Dorsolateral prefrontal cortex (tissue), 120 donors: ENCODE measurements at regions of chr15 and their contacts with region 1.

Region 1: DNA sequence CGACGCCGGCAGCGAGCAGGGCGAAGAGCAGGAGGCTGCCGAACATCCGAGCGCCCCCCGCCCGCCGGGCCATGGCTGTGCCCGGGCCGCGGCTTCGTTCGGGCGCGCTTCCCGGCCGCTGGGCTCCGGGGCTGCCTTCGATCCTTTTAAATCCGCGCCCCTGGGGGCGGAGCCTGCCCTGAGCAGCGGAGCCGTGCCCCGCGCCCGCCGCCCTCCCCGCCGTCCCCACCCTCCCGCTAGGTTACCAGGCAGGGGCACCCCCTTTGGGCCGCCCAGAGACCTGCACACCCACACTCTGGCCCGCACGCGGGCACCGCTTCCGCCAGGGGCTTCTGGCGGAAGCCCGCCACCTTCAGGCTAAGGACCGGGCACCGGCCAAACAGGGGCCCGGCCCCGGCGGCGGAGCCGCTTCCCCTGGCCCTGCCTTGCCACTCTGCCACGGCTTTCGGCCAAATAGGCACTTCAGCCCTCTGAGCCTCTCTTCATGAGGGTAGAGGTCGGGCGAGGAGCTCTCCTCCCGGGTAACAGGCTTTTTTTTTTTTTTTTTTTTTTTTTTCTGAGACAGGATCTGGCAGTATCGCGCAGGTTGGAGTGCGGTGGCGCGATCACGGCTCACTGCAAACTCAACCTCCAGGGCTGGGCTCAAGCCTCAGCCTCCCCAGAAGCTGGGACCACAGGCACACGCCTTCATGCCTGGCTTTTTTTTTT is at the start of gene NMB:
- DNase-seq: peak; percentile 39 to 75 (median 52)
- H3K4me3 ChIP-seq: peak within 1 kb of the TSS; percentile 53 to 82 (median 71)
- H3K27ac ChIP-seq: peak within 1 kb of the TSS in 57 of 59 donors; percentile 0 to 88 (median 77)
- H3K27me3 ChIP-seq: no peaks in the 10 kb centered on the region
- CTCF ChIP-seq: peak in 54 of 56 donors; percentile 30 to 84 (median 56)
- total RNA-seq, gene NMB: 0.71 to 14.1 (median 4.9) TPM

Region 2: GRCh38 chr15:83955806-83956265 is 702.4 kb before region 1 on chr15:
- intact Hi-C with region 1: no loop called
- DNase-seq: no peak
- H3K4me3 ChIP-seq: no peak overlapping the region
- H3K27ac ChIP-seq: no peak overlapping the region
- H3K27me3 ChIP-seq: no peaks in the 10 kb centered on the region
- CTCF ChIP-seq: no peak

Region 3: DNA sequence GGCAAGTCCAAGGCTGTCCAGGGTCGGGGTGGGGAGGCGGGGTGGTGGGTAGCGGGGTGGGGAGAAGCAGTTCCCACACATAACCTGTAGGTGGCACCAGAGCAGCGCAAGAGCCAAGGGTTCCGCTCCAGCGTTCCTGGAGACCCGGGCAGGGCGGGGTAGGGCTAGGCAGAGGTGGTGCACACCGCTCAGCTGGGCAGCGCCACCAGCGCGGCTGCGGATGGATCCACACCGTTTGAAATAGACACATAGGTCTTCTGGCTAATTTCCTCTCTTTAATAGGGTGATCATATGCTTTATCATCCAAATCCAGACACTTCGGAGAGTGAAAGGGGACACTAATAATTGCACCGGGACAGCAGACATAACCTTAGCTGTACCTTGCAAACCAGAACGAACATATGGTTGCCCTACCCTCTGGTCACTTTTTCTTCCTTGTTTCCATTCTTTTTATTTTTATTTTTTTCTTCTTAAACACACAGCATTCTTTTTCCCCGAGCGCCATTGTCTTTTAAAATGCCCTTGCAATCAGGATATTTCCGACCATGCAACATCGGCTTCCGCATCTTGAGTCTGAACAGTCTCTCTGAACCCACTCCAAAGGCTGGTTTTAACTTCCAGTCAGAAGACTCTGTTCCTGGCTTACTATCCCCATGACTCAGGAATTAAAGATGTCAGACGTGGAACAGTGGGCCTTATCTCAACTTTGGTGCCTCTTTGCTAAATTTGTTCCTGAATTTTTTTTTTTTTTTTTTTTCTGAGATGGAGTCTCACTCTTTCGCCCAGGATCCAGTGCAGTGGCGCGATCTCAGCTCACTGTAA is 70.0 kb before region 1 on chr15:
- intact Hi-C with region 1: loop called in 1 of 2 experiments (anchors 5 kb)
- DNase-seq: peak; percentile 59 to 88 (median 76)
- H3K4me3 ChIP-seq: peak overlapping the region; percentile 9 to 67 (median 50)
- H3K27ac ChIP-seq: no peak overlapping the region
- H3K27me3 ChIP-seq: no peaks in the 10 kb centered on the region
- CTCF ChIP-seq: peak in 55 of 56 donors; percentile 66 to 97 (median 87)

Region 4: DNA sequence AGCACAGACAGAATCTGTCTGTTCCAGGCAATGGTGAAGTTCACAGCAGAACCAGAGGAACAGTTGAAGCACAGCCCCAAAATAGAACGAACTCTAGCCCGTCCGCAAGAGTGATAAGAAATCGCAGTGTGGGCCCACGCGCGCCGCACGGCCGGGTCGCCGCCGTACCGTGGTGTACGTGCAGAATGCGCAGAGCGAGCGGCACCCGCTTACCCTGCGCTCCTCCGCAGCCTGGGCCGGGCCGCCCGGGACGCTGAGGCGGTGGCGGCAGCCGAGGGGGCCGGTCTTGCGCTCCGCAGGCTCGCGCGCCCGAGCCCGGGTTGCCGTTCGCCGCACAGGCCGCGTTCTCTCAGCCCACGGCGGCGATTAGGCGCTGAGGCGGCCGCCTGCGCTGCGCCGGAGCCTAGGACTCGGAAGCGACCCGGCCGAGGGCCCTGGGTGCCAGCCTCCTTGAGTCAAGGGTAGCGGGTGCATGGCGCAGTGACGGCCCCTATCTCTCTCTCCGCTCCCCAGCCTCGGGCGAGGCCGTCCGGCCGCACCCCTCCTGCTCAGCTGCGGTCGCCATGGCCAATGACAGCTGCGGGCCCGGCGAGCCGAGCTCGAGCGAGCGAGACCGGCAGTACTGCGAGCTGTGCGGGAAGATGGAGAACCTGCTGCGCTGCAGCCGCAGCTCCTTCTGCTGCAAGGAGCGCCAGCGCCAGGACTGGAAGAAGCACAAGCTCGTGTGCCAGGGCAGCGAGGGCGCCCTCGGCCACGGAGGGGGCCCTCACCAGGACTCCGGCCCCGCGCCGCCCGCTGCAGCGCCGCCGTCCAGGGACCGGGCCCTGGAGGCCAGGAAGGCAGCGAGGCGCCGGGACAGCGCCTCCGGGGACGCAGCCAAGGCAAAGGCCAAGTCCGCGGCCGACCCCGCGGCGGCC is 24.7 kb before region 1 on chr15:
- intact Hi-C with region 1: loop called (anchors 1 kb)
- DNase-seq: peak in 9 of 10 donors; percentile 39 to 75 (median 62)
- H3K4me3 ChIP-seq: peak overlapping the region; percentile 36 to 90 (median 78)
- H3K27ac ChIP-seq: peak overlapping the region; percentile 86 to 100 (median 97)
- H3K27me3 ChIP-seq: no peaks in the 10 kb centered on the region
- CTCF ChIP-seq: peak in 23 of 56 donors; percentile 3 to 54 (median 14)

Region 5: DNA sequence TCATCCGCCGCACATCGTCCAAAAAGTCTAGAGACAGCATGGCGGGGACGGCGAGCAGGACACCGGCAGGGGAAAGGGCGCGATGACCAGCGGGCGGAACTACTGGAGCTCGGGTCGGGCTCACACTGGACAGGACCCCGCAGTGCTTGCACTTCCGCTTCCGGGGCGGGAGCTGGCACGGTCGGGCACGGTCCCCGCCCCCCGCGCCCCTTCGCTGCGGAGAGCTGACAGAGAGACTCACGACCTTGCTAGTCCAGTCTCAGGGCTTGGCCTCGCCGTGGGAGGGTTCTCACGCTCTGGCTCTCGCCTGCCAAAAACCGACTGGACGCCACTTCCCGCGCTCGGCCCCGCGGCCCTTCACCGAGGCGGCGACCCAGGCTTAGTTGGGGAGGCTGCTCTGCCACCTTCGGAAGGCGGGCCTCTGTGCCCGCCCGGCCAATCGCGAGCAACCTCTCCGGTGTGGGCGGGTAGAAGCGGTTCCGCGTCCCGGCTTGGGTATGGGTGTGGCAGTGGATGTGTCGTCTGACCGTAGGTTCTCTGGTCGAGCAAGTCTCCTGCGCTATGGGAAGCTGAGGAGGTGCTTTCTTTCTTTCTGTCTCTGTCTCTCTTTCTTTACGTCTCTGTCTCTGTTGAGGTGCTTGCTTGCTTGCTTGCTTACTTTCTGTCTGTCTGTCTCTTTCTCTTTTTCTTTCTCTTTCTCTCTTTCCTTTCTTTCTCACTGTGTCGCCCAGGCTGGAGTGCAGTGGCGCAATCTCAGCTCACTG is 58.0 kb after region 1 on chr15 and contains the start of gene SEC11A:
- intact Hi-C with region 1: loop called (anchors 5 kb)
- DNase-seq: peak; percentile 93 to 97 (median 96)
- H3K4me3 ChIP-seq: peak within 1 kb of the TSS; percentile 61 to 99 (median 91)
- H3K27ac ChIP-seq: peak within 1 kb of the TSS; percentile 66 to 98 (median 95)
- H3K27me3 ChIP-seq: no peaks in the 10 kb centered on the region
- CTCF ChIP-seq: peak in 32 of 56 donors; percentile 7 to 53 (median 30)
- total RNA-seq, gene SEC11A: 22.6 to 55.4 (median 35.9) TPM

Region 6: GRCh38 chr15:84748274-84749110 is 90.3 kb after region 1 on chr15 and contains the start of gene ZNF592:
- intact Hi-C with region 1: loop called (anchors 1 to 5 kb)
- DNase-seq: peak; percentile 42 to 86 (median 68)
- H3K4me3 ChIP-seq: peak within 1 kb of the TSS; percentile 76 to 98 (median 91)
- H3K27ac ChIP-seq: peak within 1 kb of the TSS; percentile 96 to 100 (median 99)
- H3K27me3 ChIP-seq: no peaks in the 10 kb centered on the region
- CTCF ChIP-seq: peak in 7 of 56 donors; percentile 5 to 44 (median 23)
- total RNA-seq, gene ZNF592: 24.1 to 48.5 (median 30.4) TPM

Region 7: DNA sequence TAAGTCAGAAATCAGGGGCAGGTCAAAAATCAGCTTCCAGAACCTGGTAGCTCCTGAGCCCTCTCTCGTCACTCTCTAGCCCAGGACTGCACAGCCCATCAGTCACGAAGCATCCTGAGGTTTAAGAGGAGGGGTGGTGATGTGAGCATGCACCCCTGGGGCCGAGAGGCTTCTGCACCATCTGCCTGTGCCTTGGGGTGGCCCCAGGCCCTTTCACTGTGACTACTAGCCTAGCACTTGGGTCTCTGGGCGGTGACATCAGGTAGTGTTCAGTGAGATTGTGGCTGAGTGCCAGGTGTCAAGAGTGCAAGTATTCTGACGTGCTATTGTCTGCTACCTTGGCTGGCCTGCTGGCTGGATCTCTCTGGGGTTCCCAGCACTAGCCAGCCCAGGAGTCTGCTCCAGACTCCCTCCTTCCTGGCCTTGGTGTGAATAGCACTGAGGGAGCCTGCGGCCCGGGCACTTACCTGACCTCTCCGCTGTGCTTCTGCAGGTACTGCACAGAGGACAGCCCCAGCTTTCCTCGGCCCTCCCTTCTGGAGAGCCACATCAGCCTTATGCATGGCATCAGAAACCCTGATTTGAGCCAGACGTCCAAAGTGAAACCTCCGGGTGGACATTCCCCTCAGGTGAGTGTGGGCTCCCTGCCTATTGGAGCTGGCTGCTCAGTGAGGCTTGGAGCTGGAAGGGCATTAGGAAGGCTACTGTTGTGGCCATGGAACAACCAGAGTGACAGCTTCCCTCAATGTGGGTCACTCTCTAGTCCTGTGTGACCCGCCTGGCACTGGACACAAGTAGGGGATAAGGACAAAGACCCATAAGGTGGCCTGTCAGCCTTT is 141.3 kb after region 1 on chr15:
- intact Hi-C with region 1: no loop called
- DNase-seq: no peak
- H3K4me3 ChIP-seq: no peak overlapping the region
- H3K27ac ChIP-seq: no peak overlapping the region
- H3K27me3 ChIP-seq: no peaks in the 10 kb centered on the region
- CTCF ChIP-seq: no peak

Region 8: DNA sequence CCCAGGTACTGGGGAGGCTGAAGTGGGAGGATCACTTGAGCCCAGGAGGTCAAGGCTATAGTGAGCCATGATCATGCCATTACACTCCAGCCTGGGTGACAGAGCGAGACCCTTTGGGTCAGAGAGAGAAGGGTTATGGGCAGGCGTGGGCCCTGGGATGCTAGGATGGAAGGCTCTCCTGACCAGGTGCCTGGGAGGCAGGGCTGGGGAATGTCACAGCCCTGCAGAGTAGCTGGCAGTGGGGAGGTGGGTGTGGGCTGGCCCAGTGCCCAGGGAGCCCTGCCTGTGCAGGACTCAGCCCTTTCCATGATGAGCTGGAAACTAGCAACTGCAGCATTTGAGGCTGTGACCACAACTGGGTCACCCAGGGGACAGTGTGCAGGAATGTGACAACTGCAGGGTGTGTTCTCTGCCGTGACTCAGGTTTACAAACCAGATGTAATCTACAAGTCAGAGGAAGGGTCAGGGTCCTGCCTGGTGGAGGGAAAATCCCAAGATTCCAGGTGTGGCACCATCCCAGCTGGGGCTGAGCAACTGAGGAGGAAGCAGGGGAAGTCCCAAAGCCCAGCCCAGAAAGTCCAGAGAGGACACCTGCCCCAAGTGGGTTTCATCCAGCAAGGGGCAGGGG is 271.6 kb after region 1 on chr15:
- intact Hi-C with region 1: loop called (anchors 2 kb)
- DNase-seq: no peak
- H3K4me3 ChIP-seq: no peak overlapping the region
- H3K27ac ChIP-seq: no peak overlapping the region
- H3K27me3 ChIP-seq: no peaks in the 10 kb centered on the region
- CTCF ChIP-seq: no peak

Region 9: DNA sequence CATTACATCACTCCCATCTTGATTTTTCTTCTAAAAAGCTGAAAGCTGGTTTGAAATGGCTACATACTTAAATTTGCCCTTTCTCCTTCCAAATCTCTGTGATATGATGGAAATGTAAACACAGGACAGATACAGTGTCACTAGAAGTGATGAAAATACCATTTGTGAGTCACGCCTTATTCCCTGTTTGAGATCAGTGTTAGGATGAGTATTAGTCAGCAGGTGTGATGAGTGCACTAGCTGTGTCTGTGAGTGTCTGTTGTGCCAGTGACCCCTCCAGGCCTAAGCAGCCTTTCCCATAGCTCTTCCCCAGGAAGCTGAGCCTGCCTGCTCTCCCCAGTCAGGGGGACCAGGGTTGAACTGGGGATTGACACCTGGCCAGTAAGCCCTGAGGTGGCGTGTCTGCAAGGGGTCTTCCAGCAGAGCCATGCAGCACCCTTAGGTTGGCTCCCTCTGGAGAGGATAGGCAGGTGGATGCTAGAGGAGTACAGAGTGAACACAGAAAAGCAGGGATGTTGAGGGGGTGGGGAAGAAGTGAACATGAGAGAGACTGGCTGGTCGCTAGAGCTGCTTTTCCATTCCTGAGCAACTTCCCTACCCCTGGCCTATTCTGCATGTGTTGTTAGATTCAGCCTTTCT is 415.4 kb after region 1 on chr15:
- intact Hi-C with region 1: no loop called
- DNase-seq: no peak
- H3K4me3 ChIP-seq: no peak overlapping the region
- H3K27ac ChIP-seq: peak overlapping the region in 30 of 59 donors; percentile 4 to 83 (median 35)
- H3K27me3 ChIP-seq: no peaks in the 10 kb centered on the region
- CTCF ChIP-seq: no peak